Gastrocnemius medialis (tissue), 4 donors: ENCODE measurements at regions of chr16 and their contacts with region 1.

Region 1: GRCh38 chr16:20900299-20901067 is at the starts of genes DCUN1D3 and LYRM1:
- DNase-seq: peak; percentile 96 to 97
- ATAC-seq: peak; percentile 95 to 97
- H3K4me3 ChIP-seq: peak within 1 kb of the TSS; percentile 81 to 94 (median 86)
- H3K27ac ChIP-seq: peak within 1 kb of the TSS; percentile 93 to 97 (median 94)
- H3K4me1 ChIP-seq: peaks cover 24 to 62% of the 10 kb centered on the region in 2 donors
- H3K27me3 ChIP-seq: no peaks in the 10 kb centered on the region
- CTCF ChIP-seq: no peak
- POLR2A ChIP-seq: peak; percentile 69 to 77
- total RNA-seq, gene DCUN1D3: 7.6 to 10.5 (median 8.3) TPM
- total RNA-seq, gene LYRM1: 36.4 to 74.7 (median 38.8) TPM

Region 2: DNA sequence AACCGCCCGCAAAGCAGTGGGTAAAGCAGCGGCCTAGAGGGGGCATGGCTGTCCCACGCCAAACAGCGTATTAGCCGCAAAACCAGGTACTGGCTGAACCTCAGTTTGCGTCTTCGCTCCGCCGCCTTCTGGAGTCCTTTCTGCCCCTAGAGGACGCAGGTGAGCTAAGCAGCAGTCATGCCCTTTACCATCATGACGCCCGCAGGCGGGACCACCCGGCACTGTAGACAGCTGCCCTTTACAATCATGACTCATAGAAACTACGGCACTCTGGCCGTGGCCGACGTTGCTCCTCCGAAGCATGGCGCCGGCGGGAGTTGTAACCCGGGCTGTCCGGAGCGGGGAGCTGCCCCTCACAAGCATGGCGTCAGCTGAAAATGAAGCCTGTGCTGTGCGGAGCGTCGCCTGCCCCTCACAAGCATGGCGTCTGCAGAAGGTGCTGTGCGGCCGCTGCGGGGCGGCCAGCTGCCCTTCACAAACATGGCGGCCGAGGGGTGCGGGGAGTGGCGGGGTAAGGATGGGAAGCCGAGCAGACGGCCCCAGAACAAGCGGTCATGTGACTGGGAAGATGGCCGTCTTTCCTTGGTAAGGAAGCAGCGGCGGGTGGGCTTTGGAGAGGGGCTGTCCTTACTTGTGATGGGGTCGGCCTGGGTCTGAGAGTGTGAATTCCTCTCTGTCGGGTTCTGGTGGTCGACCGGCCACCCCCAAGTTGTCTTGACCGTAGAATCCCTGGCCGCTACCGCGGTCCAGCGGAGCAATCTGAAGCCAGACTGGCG is 1345.1 kb before region 1 on chr16 and contains the start of gene VPS35L:
- in situ Hi-C with region 1: no loop called
- intact Hi-C with region 1: loop called (anchors 10 kb)
- DNase-seq: peak; percentile 93 to 98
- ATAC-seq: peak; percentile 95 to 98
- H3K4me3 ChIP-seq: peak within 1 kb of the TSS; percentile 59 to 95 (median 64)
- H3K27ac ChIP-seq: peak within 1 kb of the TSS; percentile 91 to 95 (median 92)
- H3K4me1 ChIP-seq: peaks cover 8 to 17% of the 10 kb centered on the region in 2 donors
- H3K27me3 ChIP-seq: no peaks in the 10 kb centered on the region
- CTCF ChIP-seq: peak; percentile 81 to 86 (median 82)
- POLR2A ChIP-seq: peak; percentile 48 to 49
- total RNA-seq, gene VPS35L: 16.9 to 29.1 (median 24.8) TPM

Region 3: DNA sequence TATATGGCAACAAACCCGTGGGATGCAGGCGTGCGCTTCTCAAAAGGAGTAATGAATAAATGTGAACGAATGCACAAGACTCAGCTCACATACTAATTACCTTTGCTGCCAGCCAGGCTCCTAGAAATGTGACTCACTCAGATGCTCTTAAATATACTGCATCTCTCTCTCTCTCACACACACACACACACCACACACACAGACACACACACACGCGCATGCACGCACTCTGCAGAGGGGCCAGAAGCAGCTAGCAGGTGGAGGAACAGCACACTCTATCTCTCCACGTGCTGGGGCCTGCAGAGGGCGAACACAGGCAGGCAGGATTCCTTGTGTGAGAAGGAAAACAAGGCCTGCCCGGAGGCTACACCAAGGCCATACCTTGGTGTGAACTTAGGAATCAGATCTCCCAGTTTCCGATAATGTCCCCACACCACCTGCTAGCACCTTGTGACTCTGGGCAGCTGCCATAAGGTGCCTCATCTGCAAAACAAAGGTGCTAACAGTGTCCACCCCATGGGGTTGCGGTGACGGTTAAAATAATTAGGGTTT is 1021.2 kb before region 1 on chr16:
- in situ Hi-C with region 1: no loop called
- intact Hi-C with region 1: loop called (anchors 5 kb)
- DNase-seq: peak; percentile 63 to 65
- ATAC-seq: peak; percentile 22 to 29
- H3K4me3 ChIP-seq: no peak overlapping the region
- H3K27ac ChIP-seq: peak overlapping the region; percentile 86 to 99 (median 98)
- H3K4me1 ChIP-seq: peaks cover 52 to 82% of the 10 kb centered on the region in 2 donors
- H3K27me3 ChIP-seq: no peaks in the 10 kb centered on the region
- CTCF ChIP-seq: no peak
- POLR2A ChIP-seq: no peak

Region 4: GRCh38 chr16:20660325-20660724 is 240.2 kb before region 1 on chr16:
- in situ Hi-C with region 1: no loop called
- intact Hi-C with region 1: no loop called
- DNase-seq: no peak
- ATAC-seq: no peak
- H3K4me3 ChIP-seq: no peak overlapping the region
- H3K27ac ChIP-seq: no peak overlapping the region
- H3K4me1 ChIP-seq: no peaks in the 10 kb centered on the region
- H3K27me3 ChIP-seq: no peaks in the 10 kb centered on the region
- CTCF ChIP-seq: no peak
- POLR2A ChIP-seq: no peak

Region 5: GRCh38 chr16:20741554-20742285 is 158.8 kb before region 1 on chr16 and contains the start of gene THUMPD1:
- in situ Hi-C with region 1: no loop called
- intact Hi-C with region 1: loop called (anchors 5 kb)
- DNase-seq: peak; percentile 91 to 97
- ATAC-seq: peak; percentile 96
- H3K4me3 ChIP-seq: peak within 1 kb of the TSS; percentile 97 to 100 (median 99)
- H3K27ac ChIP-seq: peak within 1 kb of the TSS; percentile 98 to 100 (median 98)
- H3K4me1 ChIP-seq: peaks cover 12 to 16% of the 10 kb centered on the region in 2 donors
- H3K27me3 ChIP-seq: no peaks in the 10 kb centered on the region
- CTCF ChIP-seq: peak in 3 of 5 experiments; percentile 19 to 28 (median 23)
- POLR2A ChIP-seq: peak; percentile 70 to 86
- total RNA-seq, gene THUMPD1: 42.0 to 61.7 (median 53.8) TPM

Region 6: DNA sequence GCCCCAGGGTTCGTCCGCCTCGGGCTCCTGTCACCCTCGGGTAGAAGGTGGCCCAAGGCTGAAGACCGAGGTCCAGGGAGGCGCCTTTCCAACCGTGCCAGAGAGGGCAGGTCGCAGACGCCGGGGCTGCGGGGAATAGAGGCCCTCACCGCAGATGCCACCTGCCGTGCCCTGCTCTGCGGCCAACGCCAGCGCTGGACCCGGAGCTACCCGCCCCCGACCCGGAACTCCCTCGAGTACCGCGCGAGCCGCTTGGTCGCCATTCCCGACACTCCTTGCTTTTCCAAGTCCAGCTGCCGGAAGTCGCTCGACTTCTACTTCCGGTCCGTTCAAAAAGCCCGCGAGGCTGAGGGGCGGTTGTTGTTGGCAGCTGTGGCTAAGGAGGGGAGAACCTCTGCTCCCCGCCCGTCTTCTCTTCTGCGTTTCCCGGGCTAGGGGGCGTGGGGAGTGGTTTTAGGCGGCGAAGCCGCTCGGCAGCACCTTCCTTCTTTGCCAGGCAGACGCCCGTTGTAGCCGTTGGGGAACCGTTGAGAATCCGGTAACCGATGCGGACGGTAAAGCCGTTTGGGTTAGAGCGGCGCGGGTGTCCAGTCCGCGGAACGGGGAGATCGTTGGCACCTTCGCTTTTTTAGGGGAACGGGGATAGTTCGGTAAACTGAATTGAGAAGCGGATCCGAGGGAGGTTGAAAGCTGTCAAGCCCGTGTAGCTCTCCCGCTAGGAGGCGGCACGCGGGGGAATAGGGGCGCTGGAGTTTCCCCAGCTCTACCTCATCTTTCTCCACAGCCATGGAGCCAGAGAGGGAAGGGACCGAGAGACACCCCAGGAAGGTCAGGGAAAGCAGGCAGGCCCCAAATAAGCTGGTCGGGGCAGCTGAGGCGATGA is 94.1 kb before region 1 on chr16 and contains the starts of genes ERI2 and REXO5:
- in situ Hi-C with region 1: no loop called
- intact Hi-C with region 1: loop called (anchors 2 kb)
- DNase-seq: peak; percentile 84 to 87
- ATAC-seq: peak; percentile 95 to 97
- H3K4me3 ChIP-seq: peak within 1 kb of the TSS; percentile 78 to 94 (median 86)
- H3K27ac ChIP-seq: peak within 1 kb of the TSS; percentile 87 to 92 (median 88)
- H3K4me1 ChIP-seq: peaks cover 9 to 17% of the 10 kb centered on the region in 2 donors
- H3K27me3 ChIP-seq: no peaks in the 10 kb centered on the region
- CTCF ChIP-seq: peak in 3 of 5 experiments; percentile 12 to 51 (median 41)
- POLR2A ChIP-seq: peak; percentile 44 to 45
- total RNA-seq, gene ERI2: 3.0 to 30.5 (median 9.8) TPM
- total RNA-seq, gene REXO5: 0.52 to 3.1 (median 1.6) TPM

Region 7: DNA sequence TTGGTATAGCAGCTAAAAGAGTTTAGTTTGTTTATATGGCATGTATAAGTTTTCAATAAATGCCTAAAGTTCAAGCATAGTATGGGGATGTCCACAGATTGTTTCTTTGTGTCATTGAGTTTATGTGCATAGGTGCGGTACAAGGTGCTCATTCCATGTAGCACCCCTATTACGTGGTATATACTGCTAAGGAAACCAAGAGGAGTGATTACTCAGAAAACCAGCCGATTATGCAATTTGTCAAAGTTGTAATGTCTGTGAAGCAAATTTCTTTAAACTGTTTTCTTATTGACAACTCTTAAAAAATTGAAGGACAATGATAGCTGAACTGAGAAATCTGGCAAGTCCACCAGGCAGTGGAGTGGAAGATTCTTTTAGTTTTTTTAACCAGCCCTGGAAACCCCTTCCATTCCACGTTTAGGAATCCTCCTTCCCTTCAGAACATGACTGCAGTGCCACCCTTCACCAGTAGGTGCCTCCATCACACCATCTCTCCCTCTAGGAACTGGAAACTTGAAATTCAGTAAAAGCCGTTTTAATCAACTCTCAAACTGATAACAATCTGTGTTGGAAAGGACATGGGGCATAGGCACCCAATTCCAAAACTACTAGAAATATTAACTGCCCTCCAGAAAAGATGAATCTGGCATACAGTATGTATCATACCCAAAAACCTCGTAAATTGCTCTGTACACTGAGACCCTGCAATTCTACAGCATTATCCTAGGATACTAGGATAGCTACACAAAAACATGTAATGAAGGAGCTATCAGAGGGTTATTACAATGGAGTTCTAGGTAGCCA is 50.7 kb before region 1 on chr16:
- in situ Hi-C with region 1: no loop called
- intact Hi-C with region 1: loop called (anchors 1 kb)
- DNase-seq: peak in 1 of 2 donors; percentile 42
- ATAC-seq: peak in 1 of 2 donors; percentile 43
- H3K4me3 ChIP-seq: no peak overlapping the region
- H3K27ac ChIP-seq: peak overlapping the region in 3 of 4 donors; percentile 38 to 75 (median 72)
- H3K4me1 ChIP-seq: peaks cover 23 to 42% of the 10 kb centered on the region in 2 donors
- H3K27me3 ChIP-seq: no peaks in the 10 kb centered on the region
- CTCF ChIP-seq: peak; percentile 89 to 96 (median 96)
- POLR2A ChIP-seq: no peak

Region 8: DNA sequence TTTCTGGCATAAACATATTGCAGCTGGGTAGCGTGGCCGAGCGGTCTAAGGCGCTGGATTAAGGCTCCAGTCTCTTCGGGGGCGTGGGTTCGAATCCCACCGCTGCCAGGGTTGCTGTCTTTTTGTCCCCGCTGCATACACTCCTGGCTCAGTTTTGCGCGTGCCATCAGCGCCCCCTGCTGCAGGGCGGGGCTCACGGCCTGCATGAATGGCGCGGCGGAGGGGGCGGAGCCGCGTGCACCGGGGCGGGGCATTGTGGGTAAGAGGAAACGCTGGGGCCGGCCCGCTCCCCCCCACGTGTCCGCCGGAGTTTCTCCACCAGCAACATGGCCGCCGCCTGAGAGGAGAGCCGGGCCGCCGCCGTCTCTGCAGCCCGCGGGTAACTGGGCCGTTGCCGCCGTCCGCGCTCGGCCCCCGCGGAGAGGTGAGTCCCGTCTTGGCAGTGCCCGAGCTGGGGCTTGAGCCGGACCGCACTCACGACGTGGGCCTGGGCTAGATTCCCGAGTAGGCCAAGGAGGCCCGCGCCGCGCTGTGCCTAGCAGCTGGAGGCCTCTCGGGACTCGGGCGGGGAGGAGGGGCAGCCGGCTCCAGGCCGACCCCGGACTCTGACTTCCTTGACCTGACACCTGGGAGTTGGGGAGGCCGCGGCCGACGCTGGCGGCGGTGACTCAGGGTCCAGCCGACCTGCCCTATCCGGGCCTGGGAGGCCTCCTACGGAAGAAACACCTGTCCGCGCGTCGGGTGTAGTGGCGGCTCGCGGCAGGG is 1396.8 kb after region 1 on chr16 and contains the start of gene POLR3E:
- in situ Hi-C with region 1: no loop called
- intact Hi-C with region 1: loop called (anchors 2 kb)
- DNase-seq: peak; percentile 98 to 99
- ATAC-seq: peak; percentile 77 to 79
- H3K4me3 ChIP-seq: peak within 1 kb of the TSS; percentile 87 to 97 (median 94)
- H3K27ac ChIP-seq: peak within 1 kb of the TSS; percentile 97 to 100 (median 98)
- H3K4me1 ChIP-seq: peaks cover 12 to 18% of the 10 kb centered on the region in 2 donors
- H3K27me3 ChIP-seq: no peaks in the 10 kb centered on the region
- CTCF ChIP-seq: peak; percentile 93 to 98 (median 98)
- POLR2A ChIP-seq: peak; percentile 88 to 90
- total RNA-seq, gene POLR3E: 105 to 182 (median 116) TPM